BJ (cell line): ENCODE measurements at regions of chr17 and their contacts with region 1.

Region 1: DNA sequence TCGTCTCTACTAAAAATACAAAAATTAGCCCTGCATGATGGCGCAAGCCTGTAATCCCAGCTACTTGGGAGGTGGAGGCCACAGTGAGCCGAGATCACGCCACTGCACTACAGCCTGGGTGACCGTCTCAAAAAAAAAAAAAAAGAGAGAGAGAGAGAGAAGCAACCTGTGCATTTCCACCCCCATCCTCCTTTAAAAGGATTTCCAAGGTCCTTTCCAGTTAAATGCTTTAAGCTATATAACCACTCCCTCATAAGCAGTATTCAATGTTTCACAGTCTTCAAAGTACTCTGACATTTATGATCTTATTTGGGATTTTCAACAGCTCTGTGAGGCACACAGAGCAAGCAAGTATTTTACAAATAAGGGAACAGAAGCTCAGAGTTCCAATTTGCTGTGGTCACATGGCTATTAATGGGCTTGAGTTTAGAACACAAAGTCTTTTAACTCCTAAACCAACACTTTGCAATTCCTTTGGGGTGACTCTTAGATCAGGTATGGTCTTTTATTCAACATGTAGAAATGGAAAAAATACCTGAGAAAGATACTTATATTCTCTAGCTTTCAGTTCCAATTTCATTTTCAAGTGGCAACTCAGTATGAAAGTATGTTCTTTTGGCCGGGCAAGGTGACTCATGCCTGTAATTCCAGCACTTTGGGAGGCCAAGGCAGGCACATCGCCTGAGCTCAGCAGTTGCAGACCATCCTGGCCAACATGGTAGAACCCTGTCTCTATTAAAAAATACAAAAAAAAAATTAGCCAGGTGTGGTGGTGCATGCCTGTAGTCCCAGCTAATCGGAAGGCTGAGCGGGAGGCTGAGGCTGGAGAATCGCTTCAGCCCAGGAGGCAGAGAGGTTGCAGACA is 31.3 kb downstream of the SPOP start:
- DNase-seq: peak; percentile 59
- H3K4me3 ChIP-seq: no peak overlapping the region
- H3K27me3 ChIP-seq: no peaks in the 10 kb centered on the region
- CTCF ChIP-seq: no peak

Region 2: GRCh38 chr17:49618028-49618611 is 28.5 kb before region 1 on chr17:
- CTCF ChIA-PET with region 1: no interaction called
- POLR2A ChIA-PET with region 1: interaction called, 11 read pairs
- DNase-seq: no peak
- H3K4me3 ChIP-seq: no peak overlapping the region
- H3K27me3 ChIP-seq: no peaks in the 10 kb centered on the region
- CTCF ChIP-seq: no peak

Region 3: GRCh38 chr17:49664706-49665211 is 18.1 kb after region 1 on chr17:
- CTCF ChIA-PET with region 1: interaction called, 3 read pairs
- POLR2A ChIA-PET with region 1: interaction called, 10 read pairs
- DNase-seq: no peak
- H3K4me3 ChIP-seq: no peak overlapping the region
- H3K27me3 ChIP-seq: no peaks in the 10 kb centered on the region
- CTCF ChIP-seq: no peak